ENCODE measurements at regions of chr17 and their contacts with region 1.

Region 1: GRCh38 chr17:79045842-79046196 is 21.9 kb downstream of the C1QTNF1 start:
- DNase-seq: peak in 8 of 9 donors; percentile 23 to 71 (median 56)
- ATAC-seq: peak; percentile 85
- H3K4me3 ChIP-seq: no peak overlapping the region
- H3K4me3 Mint-ChIP-seq: no peak overlapping the region
- H3K27ac ChIP-seq: no peak overlapping the region
- H3K27ac Mint-ChIP-seq: peak overlapping the region in 1 of 9 donors; percentile 32
- H3K4me1 ChIP-seq: no peaks in the 10 kb centered on the region
- H3K4me1 Mint-ChIP-seq: peaks cover 0 to 9% (median 5%) of the 10 kb centered on the region in 7 donors
- H3K27me3 ChIP-seq: no peaks in the 10 kb centered on the region
- H3K27me3 Mint-ChIP-seq: peaks cover 4 to 17% (median 12%) of the 10 kb centered on the region in 5 donors

Region 2: DNA sequence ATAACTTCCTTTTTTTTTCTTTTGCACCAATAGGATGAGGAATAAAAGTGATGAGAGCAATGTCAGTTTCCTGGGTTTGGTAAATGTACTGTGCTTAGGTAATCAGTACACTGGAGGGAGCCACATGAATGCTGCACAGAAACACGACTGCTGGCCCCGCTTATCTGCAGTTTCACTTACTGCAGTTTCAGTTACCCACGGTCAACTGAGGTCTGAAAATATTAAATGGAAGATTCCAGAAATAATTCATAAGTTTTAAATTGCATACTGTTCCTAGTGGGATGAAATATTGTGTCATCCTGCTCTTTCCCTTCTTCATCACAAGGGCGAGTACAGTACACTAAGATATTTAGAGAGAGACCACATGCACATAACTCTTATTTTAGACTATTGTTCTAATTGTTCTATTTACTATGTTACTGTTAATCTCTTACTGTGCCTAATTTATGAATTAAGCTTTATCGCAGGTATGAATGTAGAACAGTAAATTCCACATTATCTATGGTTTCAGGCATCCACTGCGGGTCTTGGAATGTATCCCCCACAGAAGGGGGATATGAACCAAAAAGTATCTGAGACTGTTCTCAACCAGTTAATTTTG is 59.7 kb before region 1 on chr17:
- CTCF ChIA-PET with region 1: interaction called, 3 read pairs
- POLR2A ChIA-PET with region 1: no interaction called
- intact Hi-C with region 1: loop called in 1 of 2 experiments (anchors 1 kb)
- DNase-seq: peak in 3 of 9 donors; percentile 24 to 36 (median 25)
- ATAC-seq: peak; percentile 91
- H3K4me3 ChIP-seq: peak overlapping the region; percentile 11
- H3K4me3 Mint-ChIP-seq: peak overlapping the region; percentile 66 to 84 (median 72)
- H3K27ac ChIP-seq: no peak overlapping the region
- H3K27ac Mint-ChIP-seq: peak overlapping the region in 3 of 9 donors; percentile 22 to 71 (median 25)
- H3K4me1 ChIP-seq: peaks cover 7 to 16% of the 10 kb centered on the region in 2 donors
- H3K4me1 Mint-ChIP-seq: peaks cover 13 to 15% (median 15%) of the 10 kb centered on the region in 7 donors
- H3K27me3 ChIP-seq: no peaks in the 10 kb centered on the region
- H3K27me3 Mint-ChIP-seq: no peaks in the 10 kb centered on the region

Region 3: GRCh38 chr17:78993241-78993956 is 52.4 kb before region 1 on chr17:
- CTCF ChIA-PET with region 1: interaction called, 3 read pairs
- POLR2A ChIA-PET with region 1: no interaction called
- intact Hi-C with region 1: loop called in 1 of 2 experiments (anchors 1 kb)
- DNase-seq: peak in 7 of 9 donors; percentile 31 to 58 (median 45)
- ATAC-seq: peak; percentile 81
- H3K4me3 ChIP-seq: no peak overlapping the region
- H3K4me3 Mint-ChIP-seq: no peak overlapping the region
- H3K27ac ChIP-seq: no peak overlapping the region
- H3K27ac Mint-ChIP-seq: peak overlapping the region in 5 of 9 donors; percentile 25 to 63 (median 59)
- H3K4me1 ChIP-seq: no peaks in the 10 kb centered on the region
- H3K4me1 Mint-ChIP-seq: peaks cover 0 to 14% (median 7%) of the 10 kb centered on the region in 7 donors
- H3K27me3 ChIP-seq: no peaks in the 10 kb centered on the region
- H3K27me3 Mint-ChIP-seq: no peaks in the 10 kb centered on the region

Region 4: GRCh38 chr17:79019632-79020584 is 25.9 kb before region 1 on chr17:
- CTCF ChIA-PET with region 1: interaction called, 6 read pairs
- POLR2A ChIA-PET with region 1: no interaction called
- intact Hi-C with region 1: loop called (anchors 1 kb)
- DNase-seq: peak in 7 of 9 donors; percentile 26 to 66 (median 47)
- ATAC-seq: peak; percentile 63
- H3K4me3 ChIP-seq: no peak overlapping the region
- H3K4me3 Mint-ChIP-seq: no peak overlapping the region
- H3K27ac ChIP-seq: no peak overlapping the region
- H3K27ac Mint-ChIP-seq: no peak overlapping the region
- H3K4me1 ChIP-seq: peaks cover 3 to 4% of the 10 kb centered on the region in 2 donors
- H3K4me1 Mint-ChIP-seq: peaks cover 0 to 9% (median 6%) of the 10 kb centered on the region in 7 donors
- H3K27me3 ChIP-seq: no peaks in the 10 kb centered on the region
- H3K27me3 Mint-ChIP-seq: peaks cover 4 to 60% (median 13%) of the 10 kb centered on the region in 5 donors

Region 5: GRCh38 chr17:79082311-79083190 is 36.7 kb after region 1 on chr17:
- CTCF ChIA-PET with region 1: interaction called, 5 read pairs
- POLR2A ChIA-PET with region 1: no interaction called
- intact Hi-C with region 1: loop called (anchors 1 kb)
- DNase-seq: peak in 8 of 9 donors; percentile 33 to 67 (median 51)
- ATAC-seq: peak; percentile 69
- H3K4me3 ChIP-seq: no peak overlapping the region
- H3K4me3 Mint-ChIP-seq: no peak overlapping the region
- H3K27ac ChIP-seq: no peak overlapping the region
- H3K27ac Mint-ChIP-seq: no peak overlapping the region
- H3K4me1 ChIP-seq: no peaks in the 10 kb centered on the region
- H3K4me1 Mint-ChIP-seq: peaks cover 0 to 7% (median 0%) of the 10 kb centered on the region in 7 donors
- H3K27me3 ChIP-seq: no peaks in the 10 kb centered on the region
- H3K27me3 Mint-ChIP-seq: no peaks in the 10 kb centered on the region

Region 6: GRCh38 chr17:79087428-79088143 is 41.8 kb after region 1 on chr17:
- CTCF ChIA-PET with region 1: interaction called, 5 read pairs
- POLR2A ChIA-PET with region 1: no interaction called
- intact Hi-C with region 1: loop called (anchors 1 kb)
- DNase-seq: peak; percentile 43 to 80 (median 64)
- ATAC-seq: peak; percentile 89
- H3K4me3 ChIP-seq: no peak overlapping the region
- H3K4me3 Mint-ChIP-seq: no peak overlapping the region
- H3K27ac ChIP-seq: no peak overlapping the region
- H3K27ac Mint-ChIP-seq: no peak overlapping the region
- H3K4me1 ChIP-seq: no peaks in the 10 kb centered on the region
- H3K4me1 Mint-ChIP-seq: peaks cover 0 to 5% (median 0%) of the 10 kb centered on the region in 7 donors
- H3K27me3 ChIP-seq: no peaks in the 10 kb centered on the region
- H3K27me3 Mint-ChIP-seq: peaks cover 0 to 5% (median 2%) of the 10 kb centered on the region in 5 donors

Region 7: GRCh38 chr17:79393358-79394202 is 347.8 kb after region 1 on chr17:
- CTCF ChIA-PET with region 1: interaction called, 9 read pairs
- POLR2A ChIA-PET with region 1: no interaction called
- intact Hi-C with region 1: loop called (anchors 1 kb)
- DNase-seq: peak; percentile 30 to 75 (median 59)
- ATAC-seq: peak; percentile 75
- H3K4me3 ChIP-seq: no peak overlapping the region
- H3K4me3 Mint-ChIP-seq: no peak overlapping the region
- H3K27ac ChIP-seq: no peak overlapping the region
- H3K27ac Mint-ChIP-seq: no peak overlapping the region
- H3K4me1 ChIP-seq: no peaks in the 10 kb centered on the region
- H3K4me1 Mint-ChIP-seq: peaks cover 0 to 10% (median 5%) of the 10 kb centered on the region in 7 donors
- H3K27me3 ChIP-seq: peaks cover 0 to 11% of the 10 kb centered on the region in 2 donors
- H3K27me3 Mint-ChIP-seq: peaks cover 23 to 70% (median 51%) of the 10 kb centered on the region in 5 donors

Region 8: GRCh38 chr17:79420318-79421243 is 374.8 kb after region 1 on chr17:
- CTCF ChIA-PET with region 1: no interaction called
- POLR2A ChIA-PET with region 1: no interaction called
- intact Hi-C with region 1: no loop called
- DNase-seq: peak in 1 of 9 donors; percentile 62
- ATAC-seq: no peak
- H3K4me3 ChIP-seq: no peak overlapping the region
- H3K4me3 Mint-ChIP-seq: no peak overlapping the region
- H3K27ac ChIP-seq: no peak overlapping the region
- H3K27ac Mint-ChIP-seq: no peak overlapping the region
- H3K4me1 ChIP-seq: no peaks in the 10 kb centered on the region
- H3K4me1 Mint-ChIP-seq: no peaks in the 10 kb centered on the region
- H3K27me3 ChIP-seq: no peaks in the 10 kb centered on the region
- H3K27me3 Mint-ChIP-seq: peaks cover 0 to 21% (median 10%) of the 10 kb centered on the region in 5 donors